ENCODE measurements at regions of chr1 and their contacts with region 1.

Region 1: DNA sequence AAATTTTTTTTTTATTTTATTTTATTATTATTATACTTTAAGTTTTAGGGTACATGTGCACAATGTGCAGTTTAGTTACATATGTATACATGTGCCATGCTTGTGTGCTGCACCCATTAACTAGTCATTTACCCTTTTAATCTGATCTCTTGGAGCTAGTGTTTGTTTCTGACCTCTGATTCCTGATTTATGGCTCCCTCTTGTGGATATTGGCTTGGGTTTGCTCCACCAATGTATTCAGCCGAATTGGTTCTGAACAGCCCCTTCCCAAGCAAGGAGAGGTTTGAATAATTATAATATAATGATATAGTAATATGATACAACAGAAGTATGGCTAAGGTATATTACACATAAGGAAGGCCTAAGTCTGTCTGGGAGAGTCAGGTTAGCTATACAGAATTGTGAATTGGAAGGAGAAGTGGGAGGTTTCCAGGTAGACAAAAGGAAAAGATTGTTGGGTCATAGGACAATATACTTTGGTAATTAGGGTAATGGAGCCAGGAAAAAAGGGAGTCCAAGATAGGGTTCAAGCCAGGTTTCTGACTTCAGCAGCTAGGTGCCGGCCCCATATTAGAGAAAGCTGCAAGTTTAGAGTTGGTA is 53.1 kb upstream of the HMCN1 start:
- DNase-seq: no peak

Region 2: GRCh38 chr1:184810735-184811343 is 870.3 kb before region 1 on chr1:
- intact Hi-C with region 1: loop called (anchors 5 kb)
- DNase-seq: no peak

Region 3: GRCh38 chr1:185823467-185823866 is 142.3 kb after region 1 on chr1:
- intact Hi-C with region 1: no loop called
- DNase-seq: no peak

Measured in posterior cingulate gyrus (tissue), 11 donors.